Stomach (tissue), 19 donors: ENCODE measurements at regions of chr1 and their contacts with region 1.

Region 1: DNA sequence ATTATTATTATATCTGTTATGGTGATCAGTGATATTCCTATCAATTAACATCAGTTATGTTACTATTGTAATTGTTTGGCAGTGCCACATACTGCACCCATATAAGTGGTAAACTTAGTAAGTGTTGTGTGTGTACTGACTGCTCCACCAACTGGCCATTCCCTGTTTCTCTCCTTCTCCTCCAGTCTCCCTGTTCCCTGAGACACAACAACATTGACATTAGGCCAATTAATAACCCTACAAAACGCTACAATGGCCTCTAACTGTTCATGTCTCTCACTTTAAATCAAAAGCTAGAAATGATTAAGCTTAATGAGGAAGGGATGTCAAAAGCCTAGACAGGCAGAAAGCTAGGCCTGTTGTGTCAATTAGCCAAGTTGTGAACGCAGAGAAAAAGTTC is 6.6 kb upstream of the THRAP3 start:
- DNase-seq: peak in 1 of 2 donors; percentile 47
- H3K4me3 ChIP-seq: no peak overlapping the region
- H3K27ac ChIP-seq: no peak overlapping the region
- H3K4me1 ChIP-seq: peaks cover 0 to 7% (median 3%) of the 10 kb centered on the region in 4 donors
- H3K27me3 ChIP-seq: no peaks in the 10 kb centered on the region
- CTCF ChIP-seq: peak in 2 of 7 experiments; percentile 26 to 42
- EP300 ChIP-seq: no peak
- POLR2A ChIP-seq: no peak

Region 2: GRCh38 chr1:36553591-36554322 is 336.1 kb after region 1 on chr1:
- intact Hi-C with region 1: loop called (anchors 10 kb)
- DNase-seq: peak; percentile 64 to 79
- H3K4me3 ChIP-seq: no peak overlapping the region
- H3K27ac ChIP-seq: no peak overlapping the region
- H3K4me1 ChIP-seq: no peaks in the 10 kb centered on the region
- H3K27me3 ChIP-seq: peaks cover 0 to 66% (median 27%) of the 10 kb centered on the region in 3 donors
- CTCF ChIP-seq: peak in 4 of 7 experiments; percentile 7 to 60 (median 42)
- EP300 ChIP-seq: no peak
- POLR2A ChIP-seq: no peak